Activated CD4-positive, alpha-beta T cell treated with anti-CD3 and anti-CD28 coated beads, Interleukin-2, amount 10 ng/mL, durations not matched to agents 7 days and 5 days (primary cell): ENCODE measurements at regions of chr14 and their contacts with region 1.

Region 1: DNA sequence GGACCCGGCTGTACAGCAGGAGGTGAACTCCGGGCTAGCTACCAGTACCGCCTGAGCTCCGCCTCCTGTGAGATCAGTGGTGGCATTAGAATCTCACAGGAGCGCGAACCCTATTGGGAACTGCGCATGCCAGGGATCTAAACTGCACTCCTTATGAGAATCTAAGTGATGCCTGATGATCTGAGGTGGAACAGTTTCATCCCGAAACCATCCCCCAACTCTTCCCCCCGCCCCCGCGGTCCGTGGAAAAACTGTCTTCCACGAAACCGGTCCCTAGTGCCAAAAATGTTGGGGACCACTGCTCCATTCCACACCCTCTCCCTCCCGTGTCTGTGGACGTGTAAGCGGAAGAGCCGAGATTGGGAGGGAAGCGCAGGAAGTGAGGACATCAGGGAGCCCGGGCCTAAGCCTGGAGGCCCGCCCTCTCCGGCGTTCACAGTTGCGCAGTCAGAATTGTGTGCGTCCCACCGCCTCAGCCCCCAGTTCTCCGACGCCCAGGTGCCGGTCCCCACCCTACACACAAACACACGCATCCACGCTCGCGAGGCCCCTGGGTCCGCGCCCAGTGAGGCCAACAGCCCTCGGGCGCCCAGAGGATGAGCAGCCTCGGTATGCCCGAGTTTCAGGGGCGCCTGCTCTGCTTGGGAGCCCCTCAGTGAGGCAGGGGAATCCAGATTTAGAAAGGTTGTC is 1.8 kb upstream of the RNASE4 start:
- DNase-seq: peak; percentile 75
- H3K4me3 Mint-ChIP-seq: no peak overlapping the region
- H3K27ac Mint-ChIP-seq: no peak overlapping the region
- H3K4me1 Mint-ChIP-seq: peaks cover 14% of the 10 kb centered on the region
- H3K27me3 Mint-ChIP-seq: no peaks in the 10 kb centered on the region

Region 2: GRCh38 chr14:20603813-20604690 is 78.5 kb before region 1 on chr14:
- CTCF ChIA-PET with region 1: no interaction called
- POLR2A ChIA-PET with region 1: no interaction called
- DNase-seq: no peak
- H3K4me3 Mint-ChIP-seq: no peak overlapping the region
- H3K27ac Mint-ChIP-seq: no peak overlapping the region
- H3K4me1 Mint-ChIP-seq: peaks cover 10% of the 10 kb centered on the region
- H3K27me3 Mint-ChIP-seq: no peaks in the 10 kb centered on the region

Region 3: DNA sequence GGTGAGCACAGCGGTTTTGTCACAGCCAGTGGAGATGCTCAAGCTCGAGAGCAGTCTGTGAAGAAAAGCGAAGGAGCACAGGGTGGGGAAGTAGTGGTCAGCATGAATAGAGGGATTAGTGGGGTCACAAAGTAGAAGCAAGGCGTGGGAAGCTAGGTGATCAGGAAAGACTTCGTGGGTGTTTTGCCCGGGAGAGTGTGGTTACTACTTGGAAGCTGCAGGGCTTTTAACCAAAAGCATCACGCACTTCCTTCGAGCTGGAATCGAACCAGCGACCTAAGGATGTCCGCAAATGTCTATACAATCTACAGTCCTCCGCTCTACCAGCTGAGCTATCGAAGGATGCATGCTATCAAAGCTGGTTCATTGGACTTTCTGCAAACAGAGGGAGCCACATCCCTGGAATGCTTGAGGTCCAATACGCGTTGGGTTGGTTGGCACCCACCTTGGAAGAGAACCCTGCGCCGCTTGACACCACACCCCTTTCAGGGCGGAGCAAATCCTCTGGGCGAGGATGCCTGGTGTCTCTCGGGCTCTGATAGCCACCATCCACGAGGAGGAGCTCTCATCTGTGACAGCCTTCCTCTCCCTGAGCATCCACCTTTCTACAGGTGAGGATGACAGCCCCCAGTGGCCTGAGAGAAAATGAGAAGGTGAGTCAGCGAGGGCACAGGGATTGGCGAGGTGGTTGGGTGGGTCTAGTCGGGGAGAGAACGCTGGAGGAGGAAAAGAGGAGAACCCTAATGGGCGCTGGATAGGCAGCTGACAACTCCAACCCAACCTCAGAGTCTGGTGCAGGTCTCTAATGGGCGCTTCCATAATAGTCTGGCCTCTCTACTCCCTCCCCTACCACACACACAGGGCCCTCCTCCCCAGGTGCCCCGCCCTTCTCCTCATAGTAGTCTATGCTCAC is 25.1 kb before region 1 on chr14:
- CTCF ChIA-PET with region 1: interaction called, 13 read pairs
- POLR2A ChIA-PET with region 1: no interaction called
- DNase-seq: peak; percentile 25
- H3K4me3 Mint-ChIP-seq: no peak overlapping the region
- H3K27ac Mint-ChIP-seq: no peak overlapping the region
- H3K4me1 Mint-ChIP-seq: peaks cover 36% of the 10 kb centered on the region
- H3K27me3 Mint-ChIP-seq: peaks cover 44% of the 10 kb centered on the region

Region 4: DNA sequence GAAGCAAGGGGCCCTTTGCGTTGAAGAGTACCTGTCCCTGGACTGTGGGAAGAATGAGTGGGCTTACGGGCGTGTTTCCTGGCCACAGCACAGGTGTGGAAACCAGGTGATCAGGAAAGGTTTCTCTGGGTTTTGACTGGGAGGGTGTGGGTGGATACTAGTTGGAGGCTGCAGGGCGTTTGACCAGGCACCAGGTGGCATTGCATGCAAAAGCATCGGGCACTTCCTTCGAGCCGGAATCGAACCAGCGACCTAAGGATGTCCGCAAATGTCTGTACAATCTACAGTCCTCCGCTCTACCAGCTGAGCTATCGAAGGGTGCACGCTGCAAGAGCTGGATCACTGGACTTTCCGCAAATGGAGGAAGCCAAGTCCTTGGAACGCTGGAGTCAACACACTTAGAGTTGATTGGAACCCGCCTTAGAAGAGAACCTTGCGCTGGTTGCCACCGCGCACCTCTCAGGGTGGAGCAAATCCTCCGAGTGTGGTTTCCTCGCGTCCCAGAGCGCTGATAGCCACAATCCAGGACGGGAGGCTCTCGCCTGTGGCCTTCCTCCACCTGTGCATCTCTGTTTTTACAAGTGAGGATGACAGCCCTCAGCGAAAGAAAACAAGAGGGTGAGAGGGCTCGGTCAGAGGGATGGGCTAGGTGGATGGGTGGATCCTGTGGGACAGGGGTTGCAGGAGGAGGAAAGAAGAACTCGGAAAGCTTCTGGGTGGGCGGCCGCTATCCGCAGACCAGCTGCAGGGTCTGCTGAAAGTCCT is 19.4 kb before region 1 on chr14:
- CTCF ChIA-PET with region 1: interaction called, 42 read pairs
- POLR2A ChIA-PET with region 1: interaction called, 7 read pairs
- DNase-seq: peak; percentile 82
- H3K4me3 Mint-ChIP-seq: peak overlapping the region; percentile 66
- H3K27ac Mint-ChIP-seq: peak overlapping the region; percentile 55
- H3K4me1 Mint-ChIP-seq: peaks cover 46% of the 10 kb centered on the region
- H3K27me3 Mint-ChIP-seq: peaks cover 15% of the 10 kb centered on the region

Region 5: DNA sequence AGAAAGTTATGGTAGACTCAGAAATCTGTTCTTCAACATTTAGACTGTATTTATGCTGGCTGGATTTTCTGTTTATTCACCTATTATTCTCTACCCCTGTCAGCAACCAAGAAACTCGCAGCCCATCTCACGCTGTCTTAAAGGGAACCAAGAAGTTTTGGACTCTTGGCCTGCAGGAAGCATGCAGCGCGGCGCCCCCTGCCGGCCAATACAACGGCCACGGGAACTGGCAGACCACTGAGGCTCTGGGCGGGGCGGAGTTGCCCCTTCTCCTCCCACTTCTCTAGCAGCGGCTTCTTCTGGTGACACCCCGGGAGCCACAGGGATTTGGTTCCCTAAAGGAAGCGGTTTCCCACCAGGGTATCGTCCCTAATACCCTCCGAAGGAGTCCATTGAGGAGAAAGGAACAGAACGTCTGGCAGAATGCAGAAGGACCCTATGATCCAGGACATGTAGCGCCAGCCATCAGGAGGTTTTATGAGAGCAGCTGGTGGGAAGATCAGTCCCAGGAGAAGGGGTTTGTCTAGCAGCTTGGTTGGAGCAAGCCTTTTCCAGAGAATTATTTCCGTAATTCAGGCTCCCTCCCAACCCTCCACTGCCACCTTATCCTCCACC is 251.7 kb after region 1 on chr14:
- CTCF ChIA-PET with region 1: no interaction called
- POLR2A ChIA-PET with region 1: no interaction called
- DNase-seq: peak; percentile 22
- H3K4me3 Mint-ChIP-seq: no peak overlapping the region
- H3K27ac Mint-ChIP-seq: no peak overlapping the region
- H3K4me1 Mint-ChIP-seq: no peaks in the 10 kb centered on the region
- H3K27me3 Mint-ChIP-seq: no peaks in the 10 kb centered on the region